CD8-positive, alpha-beta T cell (primary cell): ENCODE measurements at regions of chr2 and their contacts with region 1.

Region 1: GRCh38 chr2:201118121-201118960 is 2.4 kb downstream of the CFLAR start:
- DNase-seq: peak; percentile 77 to 94 (median 89)
- ATAC-seq: peak; percentile 43
- H3K4me3 ChIP-seq: peak overlapping the region; percentile 82 to 95
- H3K4me3 Mint-ChIP-seq: peak overlapping the region; percentile 99
- H3K27ac ChIP-seq: peak overlapping the region; percentile 92
- H3K27ac Mint-ChIP-seq: peak overlapping the region; percentile 100
- H3K4me1 ChIP-seq: peaks cover 47% of the 10 kb centered on the region
- H3K4me1 Mint-ChIP-seq: peaks cover 67% of the 10 kb centered on the region
- H3K27me3 ChIP-seq: no peaks in the 10 kb centered on the region
- H3K27me3 Mint-ChIP-seq: no peaks in the 10 kb centered on the region
- CTCF ChIP-seq: peak; percentile 64

Region 2: DNA sequence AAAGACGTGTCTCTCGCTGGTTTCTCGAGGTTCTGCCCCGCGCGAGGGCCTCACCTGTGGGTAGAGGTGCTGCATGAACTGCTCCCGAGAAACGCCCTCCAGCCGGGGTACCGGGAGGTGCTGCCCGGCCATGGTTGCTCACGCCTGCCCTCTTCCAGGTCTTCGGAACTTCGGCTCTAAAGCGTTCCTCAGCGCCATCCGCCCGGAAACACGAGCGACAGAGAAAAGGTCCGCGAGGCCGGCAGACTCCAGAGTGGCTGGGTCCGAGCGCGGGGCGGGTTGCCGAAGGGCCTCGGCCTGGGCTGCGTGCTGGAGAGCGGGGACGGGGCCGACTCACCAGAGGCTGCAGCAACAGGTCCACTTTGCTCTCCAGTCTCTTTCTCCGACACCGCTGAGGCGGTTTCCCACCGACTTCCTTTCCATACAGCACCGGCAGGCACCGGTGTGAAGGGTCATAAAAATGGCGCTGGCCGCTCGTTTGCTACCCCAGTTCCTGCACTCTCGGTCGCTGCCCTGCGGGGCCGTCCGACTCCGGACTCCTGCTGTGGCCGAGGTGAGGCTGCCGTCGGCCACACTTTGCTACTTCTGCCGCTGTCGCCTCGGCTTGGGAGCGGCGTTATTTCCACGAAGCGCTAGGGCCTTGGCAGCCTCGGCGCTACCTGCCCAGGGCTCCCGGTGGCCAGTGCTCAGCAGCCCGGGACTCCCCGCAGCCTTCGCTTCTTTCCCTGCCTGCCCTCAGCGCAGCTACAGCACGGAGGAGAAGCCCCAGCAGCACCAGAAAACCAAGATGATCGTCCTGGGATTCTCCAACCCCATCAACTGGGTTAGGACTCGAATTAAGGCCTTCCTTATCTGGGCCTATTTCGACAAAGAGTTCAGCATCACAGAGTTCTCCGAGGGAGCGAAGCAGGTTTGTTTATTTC is 1162.7 kb before region 1 on chr2 and contains the starts of genes MAIP1 and TYW5:
- CTCF ChIA-PET with region 1: no interaction called
- POLR2A ChIA-PET with region 1: no interaction called
- intact Hi-C with region 1: no loop called
- DNase-seq: peak; percentile 60 to 88 (median 78)
- ATAC-seq: peak; percentile 87
- H3K4me3 ChIP-seq: peak within 1 kb of the TSS; percentile 97 to 98
- H3K4me3 Mint-ChIP-seq: peak within 1 kb of the TSS; percentile 97
- H3K27ac ChIP-seq: peak within 1 kb of the TSS; percentile 71 to 87
- H3K27ac Mint-ChIP-seq: peak within 1 kb of the TSS; percentile 91
- H3K4me1 ChIP-seq: peaks cover 34% of the 10 kb centered on the region
- H3K4me1 Mint-ChIP-seq: peaks cover 60% of the 10 kb centered on the region
- H3K27me3 ChIP-seq: no peaks in the 10 kb centered on the region
- H3K27me3 Mint-ChIP-seq: no peaks in the 10 kb centered on the region
- CTCF ChIP-seq: no peak
- total RNA-seq, gene MAIP1: 40.1 to 48.3 TPM
- total RNA-seq, gene TYW5: 20.5 to 22.2 TPM

Region 3: GRCh38 chr2:200695191-200695590 is 423.1 kb before region 1 on chr2:
- CTCF ChIA-PET with region 1: no interaction called
- POLR2A ChIA-PET with region 1: no interaction called
- intact Hi-C with region 1: no loop called
- DNase-seq: no peak
- ATAC-seq: no peak
- H3K4me3 ChIP-seq: no peak overlapping the region
- H3K4me3 Mint-ChIP-seq: no peak overlapping the region
- H3K27ac ChIP-seq: no peak overlapping the region
- H3K27ac Mint-ChIP-seq: no peak overlapping the region
- H3K4me1 ChIP-seq: no peaks in the 10 kb centered on the region
- H3K4me1 Mint-ChIP-seq: peaks cover 3% of the 10 kb centered on the region
- H3K27me3 ChIP-seq: no peaks in the 10 kb centered on the region
- H3K27me3 Mint-ChIP-seq: no peaks in the 10 kb centered on the region
- CTCF ChIP-seq: no peak

Region 4: DNA sequence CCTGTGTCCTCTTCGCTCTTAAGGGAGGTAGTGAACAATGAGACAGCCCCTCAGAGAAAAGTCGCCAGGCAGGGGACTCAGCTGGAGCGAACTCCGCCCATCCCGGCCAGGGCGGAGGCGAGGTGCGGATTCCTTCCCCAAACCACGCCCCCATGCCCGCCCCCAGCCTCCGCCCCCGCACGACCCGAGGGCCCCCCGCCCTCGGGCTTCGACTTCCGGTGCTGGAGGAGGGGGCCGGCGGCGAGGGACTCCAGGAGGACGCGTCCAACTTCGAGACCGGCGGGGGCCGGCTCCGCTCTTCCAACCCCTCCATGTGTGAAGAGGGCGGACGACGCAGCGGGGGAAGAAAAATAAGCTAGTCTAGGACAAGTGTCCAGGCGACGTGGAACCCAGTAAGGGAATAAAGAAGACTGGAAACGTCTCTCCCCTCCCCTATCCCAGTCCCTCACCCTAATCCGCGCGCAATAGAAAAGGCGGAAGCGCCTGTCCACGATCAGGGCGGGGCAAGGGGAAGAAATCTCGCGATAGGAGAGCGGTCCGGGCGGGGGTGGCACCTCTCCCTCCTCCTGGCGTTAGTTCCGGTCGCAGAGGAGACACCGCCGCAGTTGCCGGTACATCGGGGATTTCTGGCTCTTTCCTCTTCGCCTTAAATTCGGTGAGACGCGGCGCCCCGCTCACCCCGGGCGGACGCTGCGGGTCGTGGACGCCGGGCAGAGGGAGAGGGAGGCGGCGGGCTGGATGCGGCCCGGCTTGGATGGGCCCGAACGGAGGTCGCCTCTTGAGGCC is 306.8 kb before region 1 on chr2 and contains the start of gene BZW1:
- CTCF ChIA-PET with region 1: no interaction called
- POLR2A ChIA-PET with region 1: interaction called, 4 read pairs
- intact Hi-C with region 1: loop called (anchors 2 kb)
- DNase-seq: peak; percentile 94 to 98 (median 97)
- ATAC-seq: peak; percentile 82
- H3K4me3 ChIP-seq: peak within 1 kb of the TSS; percentile 69 to 90
- H3K4me3 Mint-ChIP-seq: peak within 1 kb of the TSS; percentile 99
- H3K27ac ChIP-seq: peak within 1 kb of the TSS; percentile 98
- H3K27ac Mint-ChIP-seq: peak within 1 kb of the TSS; percentile 98
- H3K4me1 ChIP-seq: peaks cover 33% of the 10 kb centered on the region
- H3K4me1 Mint-ChIP-seq: peaks cover 48% of the 10 kb centered on the region
- H3K27me3 ChIP-seq: no peaks in the 10 kb centered on the region
- H3K27me3 Mint-ChIP-seq: no peaks in the 10 kb centered on the region
- CTCF ChIP-seq: no peak
- total RNA-seq, gene BZW1: 330 to 338 TPM

Region 5: DNA sequence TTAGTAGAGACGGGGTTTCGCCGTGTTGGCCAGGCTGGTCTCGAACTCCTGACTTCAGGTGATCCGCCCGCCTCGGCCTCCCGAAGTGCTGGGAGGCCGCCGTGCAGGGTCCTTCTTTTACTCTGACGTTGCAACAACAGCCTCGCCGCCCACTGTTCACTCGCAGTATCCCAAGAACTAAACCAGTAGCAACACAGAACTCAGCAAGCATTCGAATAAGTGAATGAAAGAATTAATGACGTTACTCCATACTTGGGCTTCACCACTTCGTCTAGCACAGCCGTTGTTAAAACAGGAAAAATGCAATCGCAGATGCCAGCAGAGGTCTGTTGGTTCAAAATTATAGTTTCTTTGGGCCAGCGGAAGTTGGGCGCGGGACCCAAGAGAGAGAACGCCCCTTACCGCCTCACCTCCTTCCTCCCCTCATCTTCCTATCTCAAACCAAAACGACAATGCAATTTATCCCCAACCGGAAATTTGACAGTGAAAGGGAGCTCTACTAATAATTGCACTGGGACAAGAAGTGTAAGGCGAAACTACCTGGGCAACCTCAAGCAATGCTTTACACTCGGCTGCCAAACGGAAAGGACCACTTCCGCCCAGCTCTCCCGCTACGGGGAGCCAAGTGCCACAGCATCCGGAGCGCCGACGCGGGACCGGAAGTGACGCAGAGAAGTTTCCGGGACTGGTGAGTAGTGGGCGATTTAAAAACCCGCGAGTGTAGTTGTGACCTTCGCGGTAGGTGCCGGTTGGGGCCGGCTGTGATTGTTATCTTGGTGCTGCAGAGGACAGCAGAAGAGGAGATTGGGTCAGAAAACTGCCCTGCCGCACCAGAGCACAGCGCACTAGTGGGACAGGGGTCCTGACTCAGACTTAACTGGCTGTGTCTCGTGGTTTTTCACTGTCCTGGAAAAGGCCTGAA is 229.4 kb before region 1 on chr2 and contains the starts of genes NIF3L1 and PPIL3:
- CTCF ChIA-PET with region 1: interaction called, 4 read pairs
- POLR2A ChIA-PET with region 1: interaction called, 35 read pairs
- intact Hi-C with region 1: loop called (anchors 1 to 2 kb)
- DNase-seq: peak; percentile 92 to 99 (median 97)
- ATAC-seq: peak; percentile 70
- H3K4me3 ChIP-seq: peak within 1 kb of the TSS; percentile 77 to 78
- H3K4me3 Mint-ChIP-seq: peak within 1 kb of the TSS; percentile 94
- H3K27ac ChIP-seq: peak within 1 kb of the TSS; percentile 96
- H3K27ac Mint-ChIP-seq: peak within 1 kb of the TSS; percentile 100
- H3K4me1 ChIP-seq: peaks cover 21% of the 10 kb centered on the region
- H3K4me1 Mint-ChIP-seq: peaks cover 55% of the 10 kb centered on the region
- H3K27me3 ChIP-seq: no peaks in the 10 kb centered on the region
- H3K27me3 Mint-ChIP-seq: no peaks in the 10 kb centered on the region
- CTCF ChIP-seq: no peak
- total RNA-seq, gene NIF3L1: 3.8 to 4.9 TPM
- total RNA-seq, gene PPIL3: 48.6 to 51.0 TPM

Region 6: DNA sequence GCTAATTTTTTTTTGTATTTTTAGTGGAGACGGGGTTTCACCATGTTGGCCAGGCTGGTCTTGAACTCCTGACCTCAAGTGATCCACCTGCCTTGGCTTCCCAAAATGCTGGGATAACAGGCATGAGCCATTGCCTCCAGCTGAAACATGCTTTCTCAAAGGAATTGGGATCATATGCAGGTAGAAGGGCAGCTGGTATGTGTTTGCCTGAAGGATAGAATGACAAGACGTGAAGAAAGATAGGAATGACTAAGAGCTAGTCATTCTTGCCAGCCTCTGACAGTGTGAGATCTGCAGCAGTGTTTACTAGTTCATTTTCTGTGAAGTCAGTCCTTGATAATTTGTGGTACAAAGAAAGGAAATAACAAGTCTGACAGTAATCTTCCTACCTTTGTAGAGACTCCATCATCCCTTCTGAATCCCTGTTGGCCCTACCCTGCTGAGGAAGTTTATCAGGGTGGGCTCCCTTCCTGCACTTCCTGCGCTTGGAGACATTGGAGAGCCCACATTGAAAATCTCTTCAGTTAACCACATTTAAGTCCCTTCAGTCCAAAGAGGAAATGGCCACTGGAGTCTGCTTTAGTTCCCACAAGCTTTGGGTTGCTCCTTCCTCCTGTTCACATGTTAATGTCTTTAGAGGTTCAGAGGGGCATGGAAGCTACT is 12.3 kb after region 1 on chr2:
- CTCF ChIA-PET with region 1: interaction called, 4 read pairs
- POLR2A ChIA-PET with region 1: interaction called, 118 read pairs
- intact Hi-C with region 1: loop called in 1 of 2 experiments (anchors 1 kb)
- DNase-seq: peak in 5 of 9 experiments; percentile 40 to 80 (median 60)
- ATAC-seq: peak; percentile 65
- H3K4me3 ChIP-seq: peak overlapping the region in 1 of 2 experiments; percentile 9
- H3K4me3 Mint-ChIP-seq: peak overlapping the region; percentile 63
- H3K27ac ChIP-seq: peak overlapping the region; percentile 41 to 92
- H3K27ac Mint-ChIP-seq: peak overlapping the region; percentile 98
- H3K4me1 ChIP-seq: peaks cover 66% of the 10 kb centered on the region
- H3K4me1 Mint-ChIP-seq: peaks cover 78% of the 10 kb centered on the region
- H3K27me3 ChIP-seq: no peaks in the 10 kb centered on the region
- H3K27me3 Mint-ChIP-seq: no peaks in the 10 kb centered on the region
- CTCF ChIP-seq: no peak

Region 7: GRCh38 chr2:201151127-201151981 is 33.0 kb after region 1 on chr2:
- CTCF ChIA-PET with region 1: interaction called, 17 read pairs
- POLR2A ChIA-PET with region 1: interaction called, 7 read pairs
- intact Hi-C with region 1: no loop called
- DNase-seq: peak in 1 of 9 experiments; percentile 37
- ATAC-seq: no peak
- H3K4me3 ChIP-seq: no peak overlapping the region
- H3K4me3 Mint-ChIP-seq: no peak overlapping the region
- H3K27ac ChIP-seq: peak overlapping the region in 1 of 2 experiments; percentile 79
- H3K27ac Mint-ChIP-seq: peak overlapping the region; percentile 76
- H3K4me1 ChIP-seq: no peaks in the 10 kb centered on the region
- H3K4me1 Mint-ChIP-seq: peaks cover 25% of the 10 kb centered on the region
- H3K27me3 ChIP-seq: no peaks in the 10 kb centered on the region
- H3K27me3 Mint-ChIP-seq: no peaks in the 10 kb centered on the region
- CTCF ChIP-seq: no peak

Region 8: DNA sequence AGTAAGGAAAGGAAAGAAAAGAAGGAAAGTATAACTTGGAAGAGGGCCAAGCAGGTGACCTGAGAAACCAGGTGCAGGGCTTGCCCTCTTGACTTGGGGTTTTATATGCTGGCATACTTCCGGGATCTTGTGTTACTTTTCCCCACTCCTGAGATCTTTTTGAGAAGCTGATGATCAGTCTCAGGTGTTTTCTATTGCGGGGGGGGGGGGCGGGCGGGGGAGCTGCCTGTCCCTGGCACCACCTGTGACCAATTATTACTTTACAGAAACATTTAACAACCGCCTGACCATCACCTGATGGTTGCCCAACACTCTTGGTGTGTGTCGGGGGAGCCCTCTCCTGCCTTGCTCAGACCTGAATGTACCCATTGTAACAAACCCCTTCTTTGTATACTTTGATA is 57.7 kb after region 1 on chr2:
- CTCF ChIA-PET with region 1: interaction called, 10 read pairs
- POLR2A ChIA-PET with region 1: interaction called, 13 read pairs
- intact Hi-C with region 1: loop called in 1 of 2 experiments (anchors 5 kb)
- DNase-seq: no peak
- ATAC-seq: no peak
- H3K4me3 ChIP-seq: no peak overlapping the region
- H3K4me3 Mint-ChIP-seq: no peak overlapping the region
- H3K27ac ChIP-seq: no peak overlapping the region
- H3K27ac Mint-ChIP-seq: no peak overlapping the region
- H3K4me1 ChIP-seq: no peaks in the 10 kb centered on the region
- H3K4me1 Mint-ChIP-seq: peaks cover 12% of the 10 kb centered on the region
- H3K27me3 ChIP-seq: no peaks in the 10 kb centered on the region
- H3K27me3 Mint-ChIP-seq: no peaks in the 10 kb centered on the region
- CTCF ChIP-seq: no peak

Region 9: DNA sequence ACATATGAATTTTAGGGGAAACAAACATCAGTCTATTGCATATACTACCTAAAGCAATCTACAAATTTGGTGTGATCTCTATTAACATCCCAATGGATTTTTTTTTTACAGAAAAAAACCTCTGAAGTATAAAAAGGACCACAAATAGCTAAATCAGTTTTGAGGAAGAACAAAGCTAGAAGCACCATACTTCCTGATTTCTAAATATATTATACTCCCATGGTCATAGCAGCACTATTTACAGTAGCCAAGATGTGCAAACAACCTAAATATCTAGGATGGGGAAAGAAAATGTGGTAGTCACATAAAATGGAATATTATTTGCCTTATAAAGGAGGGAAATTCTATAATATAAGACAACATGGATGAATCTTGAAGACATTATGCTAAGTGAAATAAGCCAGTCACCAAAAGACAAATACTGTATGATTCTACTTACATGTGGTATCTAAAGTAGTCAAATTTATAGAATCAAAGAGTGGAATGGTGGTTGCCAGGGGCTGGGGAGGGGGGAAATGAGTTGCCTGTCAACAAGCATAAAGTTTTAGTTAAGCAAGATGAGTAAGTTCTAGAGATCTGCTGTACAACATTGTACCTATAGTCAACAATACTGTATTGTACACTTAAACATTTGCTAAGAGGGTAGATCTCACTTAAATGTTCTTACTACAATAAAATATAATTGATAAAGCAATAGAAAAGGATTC is 124.4 kb after region 1 on chr2:
- CTCF ChIA-PET with region 1: no interaction called
- POLR2A ChIA-PET with region 1: no interaction called
- intact Hi-C with region 1: no loop called
- DNase-seq: no peak
- ATAC-seq: no peak
- H3K4me3 ChIP-seq: no peak overlapping the region
- H3K4me3 Mint-ChIP-seq: no peak overlapping the region
- H3K27ac ChIP-seq: no peak overlapping the region
- H3K27ac Mint-ChIP-seq: peak overlapping the region; percentile 56
- H3K4me1 ChIP-seq: peaks cover 23% of the 10 kb centered on the region
- H3K4me1 Mint-ChIP-seq: peaks cover 65% of the 10 kb centered on the region
- H3K27me3 ChIP-seq: no peaks in the 10 kb centered on the region
- H3K27me3 Mint-ChIP-seq: no peaks in the 10 kb centered on the region
- CTCF ChIP-seq: no peak

Region 10: GRCh38 chr2:201257956-201258665 is 139.8 kb after region 1 on chr2:
- CTCF ChIA-PET with region 1: no interaction called
- POLR2A ChIA-PET with region 1: interaction called, 14 read pairs
- intact Hi-C with region 1: loop called (anchors 2 kb)
- DNase-seq: peak; percentile 87 to 99 (median 94)
- ATAC-seq: peak; percentile 69
- H3K4me3 ChIP-seq: peak overlapping the region; percentile 45 to 48
- H3K4me3 Mint-ChIP-seq: peak overlapping the region; percentile 89
- H3K27ac ChIP-seq: peak overlapping the region; percentile 85 to 93
- H3K27ac Mint-ChIP-seq: peak overlapping the region; percentile 97
- H3K4me1 ChIP-seq: peaks cover 68% of the 10 kb centered on the region
- H3K4me1 Mint-ChIP-seq: peaks cover 75% of the 10 kb centered on the region
- H3K27me3 ChIP-seq: no peaks in the 10 kb centered on the region
- H3K27me3 Mint-ChIP-seq: no peaks in the 10 kb centered on the region
- CTCF ChIP-seq: no peak